Mammary epithelial cell (primary cell): ENCODE measurements at regions of chr9 and their contacts with region 1.

Region 1: DNA sequence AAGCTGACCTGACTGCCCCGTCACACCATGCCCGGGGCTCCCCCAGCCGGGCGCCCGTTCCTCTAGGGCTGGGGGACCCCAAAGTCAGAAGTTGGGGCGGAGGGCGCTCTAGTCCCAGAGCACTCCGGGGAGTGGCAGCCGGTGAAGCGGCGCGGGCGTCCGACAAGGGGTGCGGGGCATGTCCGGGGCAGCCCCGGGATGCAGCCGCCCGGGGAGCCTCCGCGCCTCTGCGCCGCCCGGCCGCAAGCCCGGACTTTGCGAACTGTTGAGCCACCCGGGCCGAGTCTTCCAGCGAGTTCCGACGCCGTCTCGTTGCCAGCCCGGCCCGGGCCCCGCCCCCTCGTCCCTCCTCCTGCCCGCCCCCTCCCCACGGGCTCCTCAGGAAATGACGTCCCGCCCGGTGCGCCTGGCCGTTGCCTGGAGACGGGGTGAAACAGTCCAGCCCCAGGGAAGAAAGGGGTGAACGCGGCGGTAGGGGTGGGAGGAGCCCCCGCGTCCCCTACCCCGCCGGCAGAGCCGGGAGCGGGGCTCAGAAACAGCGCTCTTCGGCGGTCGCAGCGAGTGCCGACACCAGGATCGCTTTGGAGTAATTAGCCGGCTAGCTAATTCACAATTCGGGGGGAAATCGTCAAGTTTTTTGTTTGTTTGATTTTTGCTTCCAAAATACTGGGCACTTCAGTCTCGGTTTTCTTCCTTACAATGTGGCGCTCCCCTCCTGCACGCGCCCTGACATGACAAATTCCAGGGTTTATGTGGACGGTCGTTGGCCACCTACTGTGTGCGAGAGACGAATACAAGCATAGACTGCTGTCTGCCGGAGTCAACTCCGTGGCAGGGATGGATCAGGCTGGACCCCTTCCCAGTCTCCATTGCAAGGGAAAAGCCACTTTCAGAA is at the start of gene WHRN:
- DNase-seq: peak; percentile 88
- H3K4me3 ChIP-seq: peak within 1 kb of the TSS; percentile 64 to 79 (median 67)
- H3K27ac ChIP-seq: peak within 1 kb of the TSS; percentile 81
- H3K4me1 ChIP-seq: peaks cover 32% of the 10 kb centered on the region
- H3K27me3 ChIP-seq: no peaks in the 10 kb centered on the region
- CTCF ChIP-seq: no peak
- total RNA-seq, gene WHRN: 3.2 to 9.7 TPM

Region 2: GRCh38 chr9:114487607-114488300 is 17.7 kb before region 1 on chr9:
- CTCF ChIA-PET with region 1: interaction called, 14 read pairs
- dilution Hi-C with region 1: no loop called
- in situ Hi-C with region 1: no loop called
- intact Hi-C with region 1: loop called (anchors 1 kb)
- DNase-seq: peak; percentile 66
- H3K4me3 ChIP-seq: no peak overlapping the region
- H3K27ac ChIP-seq: no peak overlapping the region
- H3K4me1 ChIP-seq: peaks cover 17% of the 10 kb centered on the region
- H3K27me3 ChIP-seq: no peaks in the 10 kb centered on the region
- CTCF ChIP-seq: peak; percentile 89 to 96

Region 3: GRCh38 chr9:114545088-114545487 is 39.7 kb after region 1 on chr9:
- CTCF ChIA-PET with region 1: no interaction called
- dilution Hi-C with region 1: no loop called
- in situ Hi-C with region 1: no loop called
- intact Hi-C with region 1: no loop called
- DNase-seq: no peak
- H3K4me3 ChIP-seq: no peak overlapping the region
- H3K27ac ChIP-seq: no peak overlapping the region
- H3K4me1 ChIP-seq: no peaks in the 10 kb centered on the region
- H3K27me3 ChIP-seq: no peaks in the 10 kb centered on the region
- CTCF ChIP-seq: no peak